ENCODE measurements at regions of chr11 and their contacts with region 1.

Region 1: GRCh38 chr11:76152086-76152681 is 54.1 kb downstream of the WNT11 start:
- DNase-seq: peak; percentile 58 to 88 (median 81)
- ATAC-seq: peak; percentile 90
- H3K4me3 ChIP-seq: peak overlapping the region; percentile 28 to 49
- H3K4me3 Mint-ChIP-seq: peak overlapping the region; percentile 74
- H3K27ac ChIP-seq: no peak overlapping the region
- H3K27ac Mint-ChIP-seq: no peak overlapping the region
- H3K4me1 ChIP-seq: peaks cover 13% of the 10 kb centered on the region
- H3K4me1 Mint-ChIP-seq: peaks cover 25% of the 10 kb centered on the region
- H3K27me3 ChIP-seq: no peaks in the 10 kb centered on the region
- H3K27me3 Mint-ChIP-seq: peaks cover 2% of the 10 kb centered on the region
- CTCF ChIP-seq: peak; percentile 78

Region 2: DNA sequence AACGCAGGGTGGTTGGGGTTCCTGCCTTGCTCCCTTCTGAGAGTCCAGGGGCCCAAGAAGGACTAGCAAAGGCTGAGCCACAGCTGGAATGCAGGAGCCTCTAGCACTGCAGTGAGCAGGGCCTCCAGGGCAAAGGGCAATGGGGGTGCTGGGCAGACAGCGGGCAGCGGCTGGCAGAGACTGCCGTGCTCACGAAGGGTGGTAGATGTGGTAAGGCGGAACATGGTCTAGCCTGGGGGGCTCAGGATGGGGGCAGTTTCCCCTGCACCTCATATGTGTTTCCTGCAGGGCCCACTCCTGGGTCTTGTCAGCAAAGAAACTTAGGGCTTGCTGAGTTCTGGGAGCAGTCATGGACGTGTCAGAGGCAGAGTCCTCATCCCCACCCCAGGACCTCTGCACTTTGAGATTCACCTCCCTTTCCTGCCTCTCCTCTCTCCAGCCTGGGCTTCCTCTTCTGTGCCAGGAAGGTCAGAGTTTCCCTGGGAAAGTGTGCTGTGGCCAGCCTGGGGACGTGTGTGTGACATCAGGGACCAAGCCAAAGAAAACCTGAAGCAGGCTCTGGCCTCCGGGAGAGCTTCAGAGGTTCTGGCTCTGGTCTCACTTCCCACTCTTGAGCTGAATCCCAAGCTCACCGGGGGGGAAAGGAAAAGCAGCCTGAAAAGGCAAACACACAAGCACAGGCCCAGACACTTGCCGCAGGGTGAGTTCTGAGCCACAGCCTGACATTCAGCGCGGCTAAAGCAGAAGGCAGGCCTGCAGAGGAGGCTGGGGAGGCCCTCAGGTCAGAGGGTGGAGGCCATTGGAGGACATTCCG is 430.1 kb before region 1 on chr11:
- CTCF ChIA-PET with region 1: no interaction called
- POLR2A ChIA-PET with region 1: no interaction called
- intact Hi-C with region 1: loop called in 1 of 2 experiments (anchors 10 kb)
- DNase-seq: no peak
- ATAC-seq: no peak
- H3K4me3 ChIP-seq: no peak overlapping the region
- H3K4me3 Mint-ChIP-seq: no peak overlapping the region
- H3K27ac ChIP-seq: no peak overlapping the region
- H3K27ac Mint-ChIP-seq: no peak overlapping the region
- H3K4me1 ChIP-seq: no peaks in the 10 kb centered on the region
- H3K4me1 Mint-ChIP-seq: no peaks in the 10 kb centered on the region
- H3K27me3 ChIP-seq: no peaks in the 10 kb centered on the region
- H3K27me3 Mint-ChIP-seq: no peaks in the 10 kb centered on the region
- CTCF ChIP-seq: no peak

Region 3: GRCh38 chr11:75896843-75897419 is 255.3 kb before region 1 on chr11:
- CTCF ChIA-PET with region 1: interaction called, 115 read pairs
- POLR2A ChIA-PET with region 1: interaction called, 3 read pairs
- intact Hi-C with region 1: loop called (anchors 1 kb)
- DNase-seq: peak in 2 of 9 experiments; percentile 31 to 48
- ATAC-seq: peak; percentile 46
- H3K4me3 ChIP-seq: no peak overlapping the region
- H3K4me3 Mint-ChIP-seq: no peak overlapping the region
- H3K27ac ChIP-seq: no peak overlapping the region
- H3K27ac Mint-ChIP-seq: no peak overlapping the region
- H3K4me1 ChIP-seq: no peaks in the 10 kb centered on the region
- H3K4me1 Mint-ChIP-seq: peaks cover 1% of the 10 kb centered on the region
- H3K27me3 ChIP-seq: no peaks in the 10 kb centered on the region
- H3K27me3 Mint-ChIP-seq: no peaks in the 10 kb centered on the region
- CTCF ChIP-seq: peak; percentile 85

Region 4: GRCh38 chr11:76131671-76132631 is 20.2 kb before region 1 on chr11:
- CTCF ChIA-PET with region 1: interaction called, 11 read pairs
- POLR2A ChIA-PET with region 1: no interaction called
- intact Hi-C with region 1: no loop called
- DNase-seq: no peak
- ATAC-seq: no peak
- H3K4me3 ChIP-seq: no peak overlapping the region
- H3K4me3 Mint-ChIP-seq: no peak overlapping the region
- H3K27ac ChIP-seq: no peak overlapping the region
- H3K27ac Mint-ChIP-seq: peak overlapping the region; percentile 70
- H3K4me1 ChIP-seq: peaks cover 21% of the 10 kb centered on the region
- H3K4me1 Mint-ChIP-seq: peaks cover 37% of the 10 kb centered on the region
- H3K27me3 ChIP-seq: no peaks in the 10 kb centered on the region
- H3K27me3 Mint-ChIP-seq: no peaks in the 10 kb centered on the region
- CTCF ChIP-seq: no peak

Region 5: DNA sequence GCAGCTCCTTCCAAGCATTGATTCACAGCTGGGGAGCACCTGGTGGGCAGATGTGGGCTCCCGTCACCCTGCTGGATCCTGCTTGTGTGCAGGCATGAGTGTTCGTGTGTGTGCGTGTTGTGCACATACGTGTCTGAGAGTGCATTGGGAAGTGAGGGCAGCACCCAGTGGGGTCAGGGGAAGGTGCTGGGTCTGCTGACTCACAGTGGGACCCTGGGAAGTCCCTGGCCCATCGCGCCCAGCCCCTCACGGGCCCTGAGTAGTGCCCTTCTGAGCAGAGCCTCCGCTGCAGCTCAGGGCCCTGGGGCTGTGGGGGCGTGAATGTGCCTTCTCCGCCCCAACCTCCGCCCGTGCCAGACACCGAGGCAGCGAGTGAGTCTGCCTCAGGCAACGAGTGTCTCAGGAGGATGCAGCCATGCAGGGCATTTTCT is 17.3 kb after region 1 on chr11:
- CTCF ChIA-PET with region 1: interaction called, 11 read pairs
- POLR2A ChIA-PET with region 1: no interaction called
- intact Hi-C with region 1: no loop called
- DNase-seq: no peak
- ATAC-seq: no peak
- H3K4me3 ChIP-seq: no peak overlapping the region
- H3K4me3 Mint-ChIP-seq: no peak overlapping the region
- H3K27ac ChIP-seq: no peak overlapping the region
- H3K27ac Mint-ChIP-seq: no peak overlapping the region
- H3K4me1 ChIP-seq: no peaks in the 10 kb centered on the region
- H3K4me1 Mint-ChIP-seq: no peaks in the 10 kb centered on the region
- H3K27me3 ChIP-seq: no peaks in the 10 kb centered on the region
- H3K27me3 Mint-ChIP-seq: peaks cover 2% of the 10 kb centered on the region
- CTCF ChIP-seq: no peak

Measured in CD8-positive, alpha-beta T cell (primary cell).